ENCODE measurements at regions of chr9 and their contacts with region 1.

Region 1: GRCh38 chr9:89077519-89077918 is 86.3 kb downstream of the S1PR3 start:
- DNase-seq: no peak
- H3K4me3 ChIP-seq: no peak overlapping the region
- H3K27ac ChIP-seq: no peak overlapping the region
- H3K4me1 ChIP-seq: no peaks in the 10 kb centered on the region
- H3K27me3 ChIP-seq: no peaks in the 10 kb centered on the region
- CTCF ChIP-seq: no peak

Region 2: GRCh38 chr9:88551546-88552137 is 525.9 kb before region 1 on chr9:
- CTCF ChIA-PET with region 1: no interaction called
- POLR2A ChIA-PET with region 1: interaction called, 11 read pairs
- intact Hi-C with region 1: no loop called
- DNase-seq: no peak
- H3K4me3 ChIP-seq: no peak overlapping the region
- H3K27ac ChIP-seq: no peak overlapping the region
- H3K4me1 ChIP-seq: no peaks in the 10 kb centered on the region
- H3K27me3 ChIP-seq: no peaks in the 10 kb centered on the region
- CTCF ChIP-seq: no peak

Region 3: GRCh38 chr9:89721176-89721700 is 643.7 kb after region 1 on chr9:
- CTCF ChIA-PET with region 1: no interaction called
- POLR2A ChIA-PET with region 1: no interaction called
- intact Hi-C with region 1: no loop called
- DNase-seq: no peak
- H3K4me3 ChIP-seq: no peak overlapping the region
- H3K27ac ChIP-seq: no peak overlapping the region
- H3K4me1 ChIP-seq: no peaks in the 10 kb centered on the region
- H3K27me3 ChIP-seq: peaks cover 89% of the 10 kb centered on the region
- CTCF ChIP-seq: no peak